H1 (cell line): ENCODE measurements at regions of chr1 and their contacts with region 1.

Region 1: DNA sequence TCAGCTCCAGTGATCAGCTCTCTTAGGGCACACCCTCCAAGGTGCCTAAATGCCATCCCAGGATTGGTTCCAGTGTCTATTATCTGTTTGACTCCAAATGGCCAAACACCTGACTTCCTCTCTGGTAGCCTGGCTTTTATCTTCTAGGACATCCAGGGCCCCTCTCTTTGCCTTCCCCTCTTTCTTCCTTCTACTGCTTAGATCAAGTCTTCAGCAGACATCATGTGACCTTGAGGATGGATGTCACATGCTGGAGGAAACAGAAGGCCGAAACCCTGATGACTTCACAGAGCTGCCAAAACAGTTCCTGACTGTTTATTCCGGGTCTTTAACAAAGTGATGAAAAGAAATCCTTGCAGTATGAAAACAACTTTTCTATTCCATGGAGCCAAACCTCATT is 24.4 kb upstream of the WDR26 start:
- DNase-seq: no peak
- H3K4me3 ChIP-seq: no peak overlapping the region
- H3K27ac ChIP-seq: no peak overlapping the region
- H3K4me1 ChIP-seq: peaks cover 0 to 10% (median 5%) of the 10 kb centered on the region in 4 experiments; a peak in 6 of 7 replicates
- H3K27me3 ChIP-seq: no peaks in the 10 kb centered on the region
- CTCF ChIP-seq: no peak
- EP300 ChIP-seq: no peak
- POLR2A ChIP-seq: no peak
- RAD21 ChIP-seq: no peak

Region 2: DNA sequence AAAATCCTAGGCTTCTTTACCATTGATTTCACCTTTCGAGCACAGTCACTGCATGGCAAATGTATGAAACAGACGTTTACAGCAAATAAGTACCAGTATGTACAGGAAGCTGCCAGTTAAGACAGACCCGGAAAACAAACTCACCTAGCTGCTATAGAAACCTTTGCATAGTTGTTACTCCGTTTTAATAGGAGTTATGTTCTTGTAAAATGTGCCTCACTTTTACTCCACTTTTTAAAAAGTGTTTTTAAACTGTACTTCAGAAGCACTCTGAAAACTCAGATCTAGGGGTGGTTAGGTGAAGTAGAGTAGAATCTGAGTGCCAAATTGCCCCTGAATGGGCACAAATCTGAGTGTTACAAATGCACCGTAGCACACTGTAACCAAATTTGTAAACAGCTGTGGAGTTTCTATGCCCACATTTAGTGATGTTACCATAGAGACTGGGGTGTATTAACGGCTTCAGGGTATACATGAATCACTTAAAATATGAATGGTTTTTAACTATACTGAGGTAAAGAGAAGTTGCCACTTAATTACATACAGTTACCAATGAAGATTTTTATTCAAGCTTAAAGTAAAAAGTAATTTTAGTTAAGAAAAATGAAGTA is 71.6 kb before region 1 on chr1:
- CTCF ChIA-PET with region 1: interaction called, 10 read pairs
- POLR2A ChIA-PET with region 1: interaction called, 3 read pairs
- DNase-seq: no peak
- H3K4me3 ChIP-seq: no peak overlapping the region
- H3K27ac ChIP-seq: no peak overlapping the region
- H3K4me1 ChIP-seq: no peaks in the 10 kb centered on the region
- H3K27me3 ChIP-seq: no peaks in the 10 kb centered on the region
- CTCF ChIP-seq: no peak
- EP300 ChIP-seq: no peak
- POLR2A ChIP-seq: no peak
- RAD21 ChIP-seq: no peak

Region 3: DNA sequence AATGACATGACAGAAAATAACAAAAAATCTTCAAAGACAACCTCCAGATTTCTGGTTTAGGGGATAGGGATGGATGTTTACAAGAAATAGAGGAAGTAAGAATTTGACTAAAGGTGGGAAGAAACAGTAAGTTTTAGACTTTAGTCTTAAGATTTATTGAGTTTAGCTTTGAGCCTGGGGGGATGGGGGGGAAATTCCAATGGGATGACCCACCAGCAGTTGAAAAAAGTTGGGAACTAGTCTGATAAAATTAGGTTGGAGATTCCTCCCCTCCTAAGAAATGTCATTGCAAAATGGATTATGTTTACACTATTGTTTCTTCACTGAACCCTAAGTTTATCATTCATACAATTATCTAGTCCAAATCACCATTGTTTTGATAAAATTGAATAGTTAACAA is 52.8 kb before region 1 on chr1:
- CTCF ChIA-PET with region 1: interaction called, 14 read pairs
- POLR2A ChIA-PET with region 1: interaction called, 3 read pairs
- DNase-seq: no peak
- H3K4me3 ChIP-seq: no peak overlapping the region
- H3K27ac ChIP-seq: no peak overlapping the region
- H3K4me1 ChIP-seq: no peaks in the 10 kb centered on the region
- H3K27me3 ChIP-seq: no peaks in the 10 kb centered on the region
- CTCF ChIP-seq: no peak
- EP300 ChIP-seq: no peak
- POLR2A ChIP-seq: no peak
- RAD21 ChIP-seq: no peak

Region 4: GRCh38 chr1:224420106-224420505 is 38.9 kb before region 1 on chr1:
- CTCF ChIA-PET with region 1: interaction called, 11 read pairs
- POLR2A ChIA-PET with region 1: interaction called, 4 read pairs
- DNase-seq: no peak
- H3K4me3 ChIP-seq: no peak overlapping the region
- H3K27ac ChIP-seq: no peak overlapping the region
- H3K4me1 ChIP-seq: no peaks in the 10 kb centered on the region
- H3K27me3 ChIP-seq: no peaks in the 10 kb centered on the region
- CTCF ChIP-seq: no peak
- EP300 ChIP-seq: no peak
- POLR2A ChIP-seq: no peak
- RAD21 ChIP-seq: no peak

Region 5: GRCh38 chr1:224447251-224447650 is 11.7 kb before region 1 on chr1:
- CTCF ChIA-PET with region 1: interaction called, 38 read pairs
- POLR2A ChIA-PET with region 1: interaction called, 11 read pairs
- DNase-seq: no peak
- H3K4me3 ChIP-seq: no peak overlapping the region
- H3K27ac ChIP-seq: no peak overlapping the region
- H3K4me1 ChIP-seq: no peaks in the 10 kb centered on the region
- H3K27me3 ChIP-seq: no peaks in the 10 kb centered on the region
- CTCF ChIP-seq: no peak
- EP300 ChIP-seq: no peak
- POLR2A ChIP-seq: no peak
- RAD21 ChIP-seq: no peak

Region 6: GRCh38 chr1:224472806-224473205 is 13.8 kb after region 1 on chr1:
- CTCF ChIA-PET with region 1: interaction called, 28 read pairs
- POLR2A ChIA-PET with region 1: interaction called, 4 read pairs
- DNase-seq: no peak
- H3K4me3 ChIP-seq: no peak overlapping the region
- H3K27ac ChIP-seq: no peak overlapping the region
- H3K4me1 ChIP-seq: no peaks in the 10 kb centered on the region
- H3K27me3 ChIP-seq: no peaks in the 10 kb centered on the region
- CTCF ChIP-seq: no peak
- EP300 ChIP-seq: no peak
- POLR2A ChIP-seq: no peak
- RAD21 ChIP-seq: no peak

Region 7: DNA sequence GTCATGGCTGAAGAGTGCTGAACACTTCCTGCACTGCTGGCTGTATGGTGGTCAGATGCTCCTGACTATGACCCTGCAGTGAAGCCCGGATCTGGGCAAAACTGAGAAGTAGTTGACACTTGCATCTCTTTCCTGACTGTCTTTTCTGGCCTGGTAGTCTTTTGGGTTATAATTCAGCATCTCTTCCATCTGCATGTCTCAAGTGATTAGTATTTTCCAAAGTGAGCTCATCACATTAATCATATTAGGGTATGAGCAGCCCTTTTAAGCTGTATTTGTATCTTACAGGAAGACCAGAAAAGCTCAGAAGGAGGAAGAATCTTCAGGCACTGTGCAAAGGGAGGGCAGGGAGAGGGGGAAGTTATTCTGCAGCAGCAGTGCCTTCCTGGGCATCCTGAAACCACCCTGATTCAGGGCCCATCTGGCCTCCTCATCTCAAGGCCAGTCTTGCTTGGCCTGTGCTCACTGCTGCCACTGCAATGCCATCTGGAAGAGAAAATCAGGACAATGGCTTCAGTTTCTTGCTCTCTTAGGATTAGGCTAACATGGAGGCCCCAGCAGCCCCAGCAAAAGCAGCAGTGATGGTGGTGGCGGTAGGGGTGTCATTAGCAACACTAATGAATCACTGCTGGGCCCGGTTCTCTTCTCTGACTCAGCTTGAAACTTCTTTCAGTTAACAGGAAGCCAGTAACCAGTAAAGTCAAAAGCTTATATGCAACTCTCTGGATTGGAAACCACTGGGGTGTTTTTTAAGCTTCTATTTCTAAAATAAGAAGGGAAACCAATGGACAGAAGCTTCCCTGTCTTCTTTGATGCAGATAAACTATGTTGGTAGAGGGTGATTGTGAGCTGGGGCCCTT is 38.9 kb after region 1 on chr1:
- CTCF ChIA-PET with region 1: interaction called, 17 read pairs
- POLR2A ChIA-PET with region 1: interaction called, 4 read pairs
- DNase-seq: no peak
- H3K4me3 ChIP-seq: peak overlapping the region in 2 of 4 experiments; percentile 0 to 2; a peak in 2 of 8 replicates
- H3K27ac ChIP-seq: peak overlapping the region; percentile 92
- H3K4me1 ChIP-seq: peaks cover 21 to 35% (median 24%) of the 10 kb centered on the region in 4 experiments
- H3K27me3 ChIP-seq: no peaks in the 10 kb centered on the region
- CTCF ChIP-seq: peak in 1 of 3 experiments; percentile 18; a peak in 1 of 4 replicates
- EP300 ChIP-seq: no peak
- POLR2A ChIP-seq: peak in 1 of 2 experiments; percentile 44; a peak in 1 of 3 replicates
- RAD21 ChIP-seq: no peak; a peak in 1 of 4 replicates

Region 8: DNA sequence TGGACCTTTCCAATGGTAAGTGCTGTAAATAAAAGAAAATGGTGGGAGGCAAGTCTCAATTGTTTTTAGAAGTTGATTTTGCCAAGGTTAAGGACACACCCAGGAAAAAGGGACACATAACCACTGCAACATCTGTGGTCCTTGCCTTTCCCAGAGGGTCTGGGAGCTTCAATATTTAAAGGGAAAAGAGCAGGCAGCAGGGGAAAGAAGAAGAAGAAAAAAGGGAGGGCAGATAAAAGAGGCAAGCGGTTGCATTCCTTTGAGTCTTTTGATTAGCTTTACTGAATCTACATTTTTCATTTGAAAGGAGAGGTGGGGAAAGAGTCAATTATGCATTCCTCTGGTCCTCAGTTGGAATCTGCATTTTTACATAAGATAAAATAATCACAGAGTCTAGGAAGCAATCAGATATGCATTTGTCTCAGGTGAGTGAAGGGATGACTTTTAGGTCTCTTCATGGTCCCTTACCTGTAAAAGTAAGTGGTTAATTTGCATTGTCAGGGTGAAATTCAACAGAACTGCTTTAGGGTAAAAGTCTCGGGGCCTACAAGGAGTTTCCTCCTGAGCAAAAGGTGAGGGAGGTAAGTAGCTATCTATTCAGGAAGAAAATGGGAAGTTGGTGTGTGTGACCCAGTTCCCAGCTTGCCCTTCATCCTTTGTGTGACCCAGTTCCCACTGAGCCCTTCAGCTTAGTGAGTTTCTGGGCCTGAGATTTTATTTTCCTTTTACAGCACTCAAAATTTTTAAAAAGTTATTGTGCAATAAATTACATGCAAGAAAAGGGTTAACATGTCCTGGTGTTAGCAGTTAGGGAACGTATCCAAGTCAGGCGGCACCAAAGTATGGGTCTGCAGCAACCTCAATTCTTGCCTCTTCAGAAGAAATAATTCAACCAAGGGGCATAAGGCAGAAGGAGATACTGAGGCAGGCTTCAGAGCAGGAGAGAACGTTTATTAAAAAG is 148.5 kb after region 1 on chr1:
- CTCF ChIA-PET with region 1: no interaction called
- POLR2A ChIA-PET with region 1: no interaction called
- DNase-seq: no peak
- H3K4me3 ChIP-seq: peak overlapping the region in 1 of 4 experiments; percentile 9; a peak in 1 of 8 replicates
- H3K27ac ChIP-seq: no peak overlapping the region
- H3K4me1 ChIP-seq: peaks cover 2 to 15% (median 12%) of the 10 kb centered on the region in 4 experiments; a peak in 6 of 7 replicates
- H3K27me3 ChIP-seq: peaks cover 0 to 2% (median 0%) of the 10 kb centered on the region in 4 experiments; a peak in 1 of 7 replicates
- CTCF ChIP-seq: no peak
- EP300 ChIP-seq: no peak
- POLR2A ChIP-seq: no peak
- RAD21 ChIP-seq: no peak